ENCODE measurements at regions of chr17 and their contacts with region 1.

Region 1: DNA sequence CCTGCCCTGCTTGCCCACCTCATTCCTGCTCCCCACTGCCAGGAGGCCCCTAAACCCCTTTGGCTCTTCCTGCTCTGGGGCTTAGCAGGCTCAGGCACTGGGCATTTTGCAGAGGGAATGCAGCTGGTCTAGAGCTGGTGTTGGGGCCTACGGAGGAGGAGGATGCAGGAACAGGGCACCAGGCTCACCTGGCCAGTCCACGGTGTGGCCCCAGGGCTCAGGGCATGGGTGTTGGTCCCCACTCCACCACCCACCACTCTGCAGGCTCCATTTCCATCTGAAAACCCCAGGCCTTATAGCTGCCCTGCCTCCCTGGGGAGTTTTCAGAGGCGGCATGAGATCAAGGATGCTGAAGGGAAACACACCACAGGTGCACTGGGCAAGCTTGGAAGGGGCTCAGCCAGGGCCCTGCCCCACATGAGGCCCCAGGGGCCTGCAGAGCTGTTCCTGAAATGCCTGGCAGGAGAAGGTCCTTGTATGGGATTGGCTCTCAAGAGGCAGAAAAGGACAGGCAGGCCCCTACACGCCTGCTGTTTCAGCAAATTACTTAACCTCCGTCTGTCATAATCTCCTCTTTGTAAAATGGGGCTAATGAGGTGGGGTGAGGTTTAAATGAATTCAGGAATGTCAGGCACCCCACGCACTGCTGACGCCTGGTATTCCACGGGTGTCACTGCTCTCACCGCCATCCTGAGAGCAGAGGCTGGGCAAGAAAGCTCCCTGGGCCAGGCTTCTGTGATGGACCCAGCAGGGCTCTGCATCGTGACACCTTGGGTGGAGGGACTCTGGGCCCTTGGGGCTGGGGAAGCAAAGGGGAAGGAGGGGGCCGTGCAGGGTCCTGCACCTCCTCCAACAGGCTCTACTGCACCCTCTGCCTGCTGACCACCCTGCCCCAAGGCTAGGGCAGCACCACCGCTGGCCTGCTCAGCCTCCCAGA is 9.3 kb downstream of the SLC47A2 start:
- DNase-seq: no peak
- ATAC-seq: no peak
- H3K4me3 Mint-ChIP-seq: no peak overlapping the region
- H3K27ac Mint-ChIP-seq: no peak overlapping the region
- H3K4me1 Mint-ChIP-seq: peaks cover 25% of the 10 kb centered on the region
- H3K27me3 Mint-ChIP-seq: no peaks in the 10 kb centered on the region
- CTCF ChIP-seq: no peak

Region 2: GRCh38 chr17:19718604-19719354 is 11.7 kb after region 1 on chr17:
- CTCF ChIA-PET with region 1: interaction called, 12 read pairs
- POLR2A ChIA-PET with region 1: no interaction called
- DNase-seq: peak; percentile 75
- ATAC-seq: peak; percentile 82
- H3K4me3 Mint-ChIP-seq: no peak overlapping the region
- H3K27ac Mint-ChIP-seq: no peak overlapping the region
- H3K4me1 Mint-ChIP-seq: peaks cover 6% of the 10 kb centered on the region; the same call in 1 of the 2 replicates
- H3K27me3 Mint-ChIP-seq: no peaks in the 10 kb centered on the region; the same call in 1 of the 2 replicates
- CTCF ChIP-seq: peak; percentile 18; the same call in 1 of the 2 replicates

Measured in WTC11 (cell line).